H1 (cell line): ENCODE measurements at regions of chr20 and their contacts with region 1.

Region 1: DNA sequence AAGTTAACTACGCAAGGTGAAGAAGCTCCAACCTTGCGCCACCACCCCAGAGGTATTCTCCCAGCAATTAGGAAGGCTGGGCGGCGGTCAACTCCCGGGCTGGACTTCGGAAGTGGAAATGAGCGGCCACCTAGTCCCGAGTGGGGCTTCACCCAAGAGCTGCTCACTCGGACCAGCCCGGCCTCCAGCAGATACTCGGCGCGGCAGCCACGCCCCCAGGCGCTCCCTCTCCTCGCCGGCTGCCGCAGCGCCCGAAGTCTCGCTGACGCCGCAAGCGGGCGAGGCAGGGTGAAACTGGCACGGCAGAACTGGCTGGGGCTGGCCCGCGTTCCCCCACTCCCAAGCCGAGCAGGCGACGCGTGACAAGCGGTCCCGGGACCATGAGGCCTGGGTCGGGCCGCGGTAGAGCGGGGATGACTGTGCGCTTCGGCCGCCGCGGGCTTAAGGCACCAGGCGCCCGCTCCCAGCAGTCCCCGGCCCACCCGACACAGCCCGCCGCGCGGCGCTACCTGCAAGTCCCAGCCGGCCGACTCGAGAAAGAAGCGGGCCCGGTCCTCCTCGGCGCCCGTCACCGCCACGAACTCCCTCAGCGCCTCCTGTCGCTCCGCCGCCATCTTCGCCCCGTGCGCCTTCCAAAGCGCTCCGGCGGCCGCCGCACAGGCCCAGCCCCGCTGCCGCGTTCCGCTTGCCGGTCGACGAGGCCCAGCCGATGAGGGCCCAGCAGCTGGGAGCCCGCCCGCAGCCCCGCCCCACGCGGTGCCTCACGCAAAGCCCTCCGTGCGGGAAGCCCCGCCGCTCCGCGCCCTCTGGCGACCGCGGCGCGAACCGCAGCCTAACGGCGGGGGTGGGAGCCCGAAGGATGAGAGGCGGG is at the start of gene NSFL1C:
- DNase-seq: peak; percentile 88 to 99
- H3K4me3 ChIP-seq: peak within 1 kb of the TSS; percentile 76 to 96 (median 94)
- H3K27ac ChIP-seq: peak within 1 kb of the TSS; percentile 77
- H3K4me1 ChIP-seq: peaks cover 3 to 14% (median 6%) of the 10 kb centered on the region in 4 experiments; a peak in 6 of 7 replicates
- H3K27me3 ChIP-seq: no peaks in the 10 kb centered on the region
- CTCF ChIP-seq: peak; percentile 83 to 94 (median 92)
- EP300 ChIP-seq: peak in 1 of 2 experiments; percentile 92; a peak in 2 of 3 replicates
- POLR2A ChIP-seq: peak; percentile 66 to 87
- RAD21 ChIP-seq: peak; percentile 34 to 55; a peak in 3 of 4 replicates
- total RNA-seq, gene NSFL1C: 87.4 and 98.0 TPM in 2 replicates

Region 2: GRCh38 chr20:1423625-1424106 is 42.8 kb before region 1 on chr20:
- CTCF ChIA-PET with region 1: interaction called, 12 read pairs
- POLR2A ChIA-PET with region 1: interaction called, 3 read pairs
- DNase-seq: peak; percentile 65 to 80
- H3K4me3 ChIP-seq: no peak overlapping the region
- H3K27ac ChIP-seq: no peak overlapping the region
- H3K4me1 ChIP-seq: peaks cover 7 to 21% (median 12%) of the 10 kb centered on the region in 4 experiments; a peak in 6 of 7 replicates
- H3K27me3 ChIP-seq: no peaks in the 10 kb centered on the region
- CTCF ChIP-seq: peak; percentile 28 to 71 (median 57)
- EP300 ChIP-seq: peak in 1 of 2 experiments; percentile 54; a peak in 1 of 3 replicates
- POLR2A ChIP-seq: no peak
- RAD21 ChIP-seq: peak; percentile 60 to 71

Region 3: GRCh38 chr20:1450926-1451491 is 15.4 kb before region 1 on chr20:
- CTCF ChIA-PET with region 1: interaction called, 28 read pairs
- POLR2A ChIA-PET with region 1: interaction called, 7 read pairs
- DNase-seq: no peak
- H3K4me3 ChIP-seq: 0 out of 8 replicates have a peak overlapping the region, but pooled peaks of 1 of the 4 experiments have one; percentile 6
- H3K27ac ChIP-seq: no peak overlapping the region
- H3K4me1 ChIP-seq: no peaks in the 10 kb centered on the region
- H3K27me3 ChIP-seq: no peaks in the 10 kb centered on the region
- CTCF ChIP-seq: no peak
- EP300 ChIP-seq: no peak
- POLR2A ChIP-seq: no peak
- RAD21 ChIP-seq: no peak

Region 4: DNA sequence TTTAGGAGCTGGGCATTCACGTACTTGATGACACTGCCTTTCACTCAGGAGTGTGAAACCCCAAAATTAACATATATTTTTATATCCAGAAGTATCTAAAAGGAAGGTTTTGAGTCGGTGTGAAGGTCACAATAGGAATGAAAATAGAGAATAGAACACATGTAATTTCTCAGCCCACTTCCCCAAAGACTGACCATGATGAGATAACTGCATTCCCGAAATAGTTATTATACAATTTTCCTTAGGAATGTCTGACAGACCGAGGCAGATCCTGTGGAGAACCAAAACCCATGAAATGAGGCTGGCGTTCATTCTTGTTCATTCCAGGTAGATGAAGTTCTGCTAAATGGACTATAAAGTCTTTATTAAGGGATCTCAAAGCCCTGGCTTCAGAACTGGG is 10.1 kb before region 1 on chr20:
- CTCF ChIA-PET with region 1: interaction called, 28 read pairs
- POLR2A ChIA-PET with region 1: interaction called, 7 read pairs
- DNase-seq: no peak
- H3K4me3 ChIP-seq: no peak overlapping the region
- H3K27ac ChIP-seq: no peak overlapping the region
- H3K4me1 ChIP-seq: no peaks in the 10 kb centered on the region
- H3K27me3 ChIP-seq: no peaks in the 10 kb centered on the region
- CTCF ChIP-seq: no peak
- EP300 ChIP-seq: no peak
- POLR2A ChIP-seq: no peak
- RAD21 ChIP-seq: no peak

Region 5: GRCh38 chr20:1576641-1577040 is 110.2 kb after region 1 on chr20:
- CTCF ChIA-PET with region 1: no interaction called
- POLR2A ChIA-PET with region 1: no interaction called
- DNase-seq: no peak
- H3K4me3 ChIP-seq: no peak overlapping the region
- H3K27ac ChIP-seq: no peak overlapping the region
- H3K4me1 ChIP-seq: no peaks in the 10 kb centered on the region
- H3K27me3 ChIP-seq: no peaks in the 10 kb centered on the region
- CTCF ChIP-seq: no peak
- EP300 ChIP-seq: no peak
- POLR2A ChIP-seq: no peak
- RAD21 ChIP-seq: no peak